Left cardiac atrium (tissue), 4 donors: ENCODE measurements at regions of chr7 and their contacts with region 1.

Region 1: DNA sequence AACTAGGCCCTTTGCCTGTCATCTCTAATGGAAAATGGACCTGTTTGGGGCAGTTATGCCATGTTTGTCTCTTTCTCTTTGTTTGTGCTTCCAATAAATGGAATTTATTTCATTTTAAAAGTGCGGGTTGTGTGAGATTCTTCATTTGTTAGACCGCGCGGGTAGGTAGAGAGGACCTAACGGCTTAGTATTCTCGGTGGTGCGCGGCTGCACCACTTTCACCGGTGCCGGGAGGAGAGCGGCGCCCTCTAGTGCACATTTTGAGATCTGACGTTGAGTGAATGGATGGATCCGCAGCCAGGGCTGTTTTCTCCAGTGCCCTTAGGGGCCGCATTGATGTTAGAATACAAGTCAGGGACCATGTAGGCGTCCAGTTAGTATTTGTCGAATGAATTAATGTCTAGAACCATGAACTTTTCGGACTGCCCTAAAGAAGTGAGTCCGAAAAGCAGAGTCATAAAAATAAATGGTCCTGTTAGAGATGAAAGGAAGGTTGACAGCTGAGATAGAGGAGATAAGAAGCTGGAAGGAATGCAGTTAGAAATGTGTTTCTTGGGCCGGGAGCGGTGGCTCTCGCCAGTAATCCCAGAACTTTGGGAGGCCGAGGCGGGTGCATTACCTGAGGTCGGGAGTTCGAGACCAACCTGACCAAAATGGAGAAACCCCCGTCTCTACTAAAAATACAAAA is 29.3 kb upstream of the GIMAP8 start:
- DNase-seq: peak; percentile 87
- ATAC-seq: peak; percentile 97 to 98

Region 2: DNA sequence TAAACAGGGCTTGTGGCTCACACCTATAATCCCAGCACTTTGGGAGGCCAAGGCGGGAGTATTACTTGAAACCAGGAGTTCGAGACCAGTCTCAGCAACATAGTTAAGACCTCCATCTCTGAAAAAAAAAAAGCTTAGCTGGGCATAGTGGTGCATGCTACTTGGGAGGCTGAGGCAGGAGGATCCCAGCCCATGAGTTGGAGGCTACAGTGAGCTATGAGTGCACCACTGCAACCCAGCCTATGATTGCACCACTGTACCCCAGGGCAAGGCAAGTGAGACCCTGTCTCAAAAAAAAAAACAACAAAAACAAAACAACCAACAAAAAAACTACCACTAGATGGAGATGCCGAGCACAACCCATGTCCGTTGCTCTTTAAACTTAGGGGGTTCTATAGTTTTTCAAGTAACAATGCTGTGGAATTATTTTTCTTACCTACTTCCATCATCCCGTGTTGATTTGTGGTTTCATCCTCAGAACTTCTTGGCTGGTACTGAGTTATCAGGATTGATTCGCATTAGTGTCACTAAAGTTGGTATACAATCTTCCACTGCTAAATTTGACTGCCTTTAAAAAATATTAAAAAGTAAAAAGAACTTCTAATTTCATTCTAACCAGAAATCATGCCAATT is 64.8 kb before region 1 on chr7:
- intact Hi-C with region 1: loop called (anchors 5 kb)
- DNase-seq: no peak
- ATAC-seq: no peak

Region 3: GRCh38 chr7:150368096-150368883 is 52.8 kb before region 1 on chr7 and contains the start of gene REPIN1:
- intact Hi-C with region 1: loop called in 1 of 2 experiments (anchors 5 kb)
- DNase-seq: peak; percentile 94
- ATAC-seq: peak; percentile 90
- total RNA-seq, gene REPIN1: 100 to 108 TPM

Region 4: GRCh38 chr7:150479023-150479716 is 58.0 kb after region 1 on chr7:
- intact Hi-C with region 1: no loop called
- DNase-seq: no peak
- ATAC-seq: peak; percentile 44 to 67